ENCODE measurements at regions of chr1 and their contacts with region 1.

Region 1: DNA sequence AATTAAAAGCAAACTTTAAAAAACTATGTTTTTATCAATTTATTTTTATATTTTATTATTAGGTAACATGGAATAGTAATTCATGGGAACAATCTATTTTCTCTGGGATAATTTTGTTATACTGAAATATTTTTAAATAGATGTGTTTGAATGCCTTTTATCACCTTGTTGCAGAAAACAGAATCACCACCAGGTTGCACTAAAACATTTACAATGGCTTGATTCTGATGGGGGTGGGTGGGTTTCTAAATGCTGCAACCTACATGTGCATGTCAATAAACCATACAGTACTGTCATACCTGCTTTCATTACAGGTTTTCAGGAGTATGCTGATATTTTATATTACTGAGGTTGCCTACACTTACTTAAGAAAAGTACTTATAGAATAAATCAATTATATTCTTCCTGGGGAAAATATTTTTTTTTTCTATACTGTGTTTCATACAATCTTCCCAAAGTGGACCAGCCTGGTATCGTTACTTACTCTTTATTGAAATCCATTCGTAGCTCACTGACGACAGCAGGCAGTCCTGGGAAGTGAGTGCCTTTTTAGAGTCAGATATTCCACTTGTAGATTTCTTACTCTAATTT is 132.8 kb downstream of the PTPRC start:
- DNase-seq: no peak
- ATAC-seq: no peak
- H3K4me3 ChIP-seq: no peak overlapping the region
- H3K27ac ChIP-seq: no peak overlapping the region
- H3K4me1 ChIP-seq: peaks cover 5 to 12% of the 10 kb centered on the region in 2 donors
- H3K27me3 ChIP-seq: no peaks in the 10 kb centered on the region
- CTCF ChIP-seq: no peak
- POLR2A ChIP-seq: no peak

Region 2: DNA sequence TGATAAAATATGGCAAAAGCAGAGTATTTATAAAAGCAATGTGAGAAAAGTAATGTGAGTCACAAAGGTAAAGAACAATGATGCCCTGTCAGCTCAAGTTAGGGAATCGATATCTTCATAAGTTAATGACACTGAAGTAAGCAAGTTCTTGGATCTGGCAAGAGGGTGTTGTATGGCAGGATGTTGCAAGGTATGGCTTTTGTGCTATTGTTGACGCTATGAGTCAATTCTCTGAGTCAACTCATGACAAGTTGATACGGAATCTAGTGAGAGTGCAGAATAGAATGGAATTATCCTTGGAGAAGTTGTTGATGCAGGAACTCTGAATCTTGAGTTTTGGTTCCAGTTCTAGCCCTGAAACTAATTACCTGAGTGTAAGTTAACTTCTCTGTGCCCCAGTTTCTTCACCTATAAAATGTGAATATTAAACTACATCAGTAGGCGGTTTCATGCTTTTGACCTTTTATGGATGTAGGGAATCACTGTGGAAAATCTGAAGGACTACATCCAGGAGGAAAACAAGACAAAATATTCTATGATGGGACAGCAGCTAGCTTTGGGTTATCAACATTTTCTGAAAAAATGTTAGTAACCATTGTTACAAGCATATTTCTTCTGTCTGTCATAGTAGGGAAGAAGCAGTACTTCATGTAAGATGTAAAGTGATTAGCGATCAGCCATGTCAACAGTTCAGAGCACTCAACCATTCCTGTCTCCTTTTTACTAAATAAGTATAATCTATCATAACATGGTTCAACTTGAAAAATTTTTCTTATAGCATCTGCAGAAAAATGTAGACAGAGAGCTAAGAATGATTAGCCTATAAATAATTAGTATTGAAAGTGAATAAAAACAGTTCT is 328.1 kb before region 1 on chr1:
- in situ Hi-C with region 1: no loop called
- intact Hi-C with region 1: no loop called
- DNase-seq: no peak
- ATAC-seq: peak in 1 of 2 donors; percentile 49
- H3K4me3 ChIP-seq: no peak overlapping the region
- H3K27ac ChIP-seq: no peak overlapping the region
- H3K4me1 ChIP-seq: no peaks in the 10 kb centered on the region
- H3K27me3 ChIP-seq: no peaks in the 10 kb centered on the region
- CTCF ChIP-seq: no peak
- POLR2A ChIP-seq: no peak

Region 3: DNA sequence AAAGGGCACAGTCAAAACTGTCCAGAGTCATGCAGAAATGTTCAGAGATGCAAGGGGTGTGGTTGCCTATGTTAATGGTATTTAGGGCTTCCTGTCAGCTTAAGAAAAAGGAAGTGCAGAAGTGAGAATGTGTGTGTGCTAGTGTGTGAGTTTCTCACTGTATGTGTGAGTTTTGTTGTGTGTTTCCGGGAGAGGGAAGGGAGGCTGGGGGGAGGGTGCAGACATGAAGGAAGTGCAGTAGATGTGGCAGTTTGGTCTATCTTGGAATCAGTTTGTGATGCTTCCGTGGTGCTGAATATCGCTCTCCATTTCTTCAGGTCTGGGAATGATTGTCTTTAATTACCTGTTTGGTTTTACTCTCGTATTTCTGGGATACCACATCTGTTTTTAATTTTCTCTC is 214.7 kb before region 1 on chr1:
- in situ Hi-C with region 1: no loop called
- intact Hi-C with region 1: no loop called
- DNase-seq: peak; percentile 5 to 45
- ATAC-seq: peak in 1 of 2 donors; percentile 41
- H3K4me3 ChIP-seq: no peak overlapping the region
- H3K27ac ChIP-seq: no peak overlapping the region
- H3K4me1 ChIP-seq: no peaks in the 10 kb centered on the region
- H3K27me3 ChIP-seq: no peaks in the 10 kb centered on the region
- CTCF ChIP-seq: no peak
- POLR2A ChIP-seq: no peak

Region 4: DNA sequence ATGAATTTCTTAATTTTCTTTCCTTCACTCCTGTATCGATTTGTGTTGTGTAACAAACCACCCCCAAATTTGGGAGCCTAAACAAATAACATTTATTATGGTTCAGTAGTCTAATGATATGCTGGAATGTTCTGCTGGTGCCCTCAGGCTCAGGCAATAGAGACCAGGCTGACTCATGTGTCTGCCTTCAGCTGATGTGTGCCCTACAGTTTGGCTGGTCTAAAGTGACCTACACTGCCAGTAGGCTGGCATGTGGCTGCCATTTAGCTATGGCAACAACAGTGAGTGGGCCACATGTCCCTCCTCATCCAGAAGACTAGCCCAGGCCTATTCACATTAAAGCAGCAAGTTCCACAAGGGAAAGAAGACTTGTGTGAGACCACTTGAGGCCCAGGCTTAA is 17.0 kb before region 1 on chr1:
- in situ Hi-C with region 1: no loop called
- intact Hi-C with region 1: no loop called
- DNase-seq: no peak
- ATAC-seq: no peak
- H3K4me3 ChIP-seq: no peak overlapping the region
- H3K27ac ChIP-seq: no peak overlapping the region
- H3K4me1 ChIP-seq: no peaks in the 10 kb centered on the region
- H3K27me3 ChIP-seq: no peaks in the 10 kb centered on the region
- CTCF ChIP-seq: no peak
- POLR2A ChIP-seq: no peak

Region 5: DNA sequence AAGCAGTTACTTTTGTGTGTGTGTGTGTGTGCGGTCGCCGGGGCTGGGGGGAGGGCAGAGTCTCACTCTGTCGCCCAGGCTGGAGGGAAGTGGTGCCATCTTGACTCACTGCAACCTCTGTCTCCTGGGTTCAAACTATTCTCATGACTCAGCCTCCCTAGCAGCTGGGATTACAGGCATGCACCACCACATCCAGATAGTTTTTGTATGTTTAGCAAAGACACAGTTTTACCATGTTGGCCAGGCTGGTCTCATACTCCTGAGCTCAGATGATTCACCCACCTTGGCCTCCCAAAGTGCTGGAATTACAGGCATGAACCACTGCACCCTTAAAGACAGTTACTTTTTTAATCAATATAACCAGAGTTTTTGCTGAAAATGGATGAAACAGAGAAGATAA is 74.2 kb after region 1 on chr1:
- in situ Hi-C with region 1: no loop called
- intact Hi-C with region 1: no loop called
- DNase-seq: no peak
- ATAC-seq: no peak
- H3K4me3 ChIP-seq: no peak overlapping the region
- H3K27ac ChIP-seq: no peak overlapping the region
- H3K4me1 ChIP-seq: peaks cover 0 to 5% of the 10 kb centered on the region in 2 donors
- H3K27me3 ChIP-seq: no peaks in the 10 kb centered on the region
- CTCF ChIP-seq: no peak
- POLR2A ChIP-seq: no peak

Region 6: DNA sequence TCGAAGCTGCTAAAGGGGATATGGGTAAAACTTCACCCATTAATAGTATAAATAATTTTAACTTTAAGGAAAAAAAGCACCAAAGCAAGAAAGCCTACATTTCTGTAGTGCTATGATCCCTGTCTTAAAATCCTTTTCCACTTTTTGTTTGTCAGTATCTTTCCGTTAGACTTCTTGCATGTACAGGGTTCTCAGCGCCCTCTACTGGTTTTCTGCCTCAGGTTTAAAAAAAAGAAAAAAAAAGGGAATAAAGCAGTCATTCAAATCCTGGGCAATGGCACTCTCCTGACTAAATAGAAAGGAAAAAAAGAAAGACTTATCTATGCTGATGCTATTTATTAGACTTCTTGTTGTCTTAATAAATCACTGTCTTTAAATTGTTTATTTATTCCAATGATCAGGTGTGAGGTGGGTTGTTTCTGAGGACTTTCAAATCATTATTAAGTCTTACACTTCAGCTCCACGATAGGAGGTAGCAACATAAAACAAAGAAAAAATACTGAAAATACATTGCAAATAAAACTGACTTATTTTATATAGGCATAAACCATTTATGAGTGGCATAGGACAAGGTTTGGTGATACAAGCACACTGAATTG is 780.4 kb after region 1 on chr1:
- in situ Hi-C with region 1: loop called in 1 of 4 experiments (anchors 25 kb)
- intact Hi-C with region 1: no loop called
- DNase-seq: no peak
- ATAC-seq: no peak
- H3K4me3 ChIP-seq: no peak overlapping the region
- H3K27ac ChIP-seq: no peak overlapping the region
- H3K4me1 ChIP-seq: no peaks in the 10 kb centered on the region
- H3K27me3 ChIP-seq: no peaks in the 10 kb centered on the region
- CTCF ChIP-seq: peak in 2 of 5 experiments; percentile 14 to 44
- POLR2A ChIP-seq: no peak

Region 7: GRCh38 chr1:200510228-200510623 is 1738.6 kb after region 1 on chr1:
- in situ Hi-C with region 1: loop called in 1 of 4 experiments (anchors 25 kb)
- intact Hi-C with region 1: no loop called
- DNase-seq: peak; percentile 29 to 32
- ATAC-seq: peak; percentile 65 to 75
- H3K4me3 ChIP-seq: no peak overlapping the region
- H3K27ac ChIP-seq: no peak overlapping the region
- H3K4me1 ChIP-seq: no peaks in the 10 kb centered on the region
- H3K27me3 ChIP-seq: no peaks in the 10 kb centered on the region
- CTCF ChIP-seq: peak; percentile 51 to 93 (median 79)
- POLR2A ChIP-seq: no peak